Activated B cell treated with CpG ODN at 0.5 μM for 24 hours (primary cell): ENCODE measurements at regions of chr16 and their contacts with region 1.

Region 1: GRCh38 chr16:31458844-31459721 is at the start of gene ARMC5:
- DNase-seq: peak; percentile 93
- ATAC-seq: peak; percentile 75
- H3K4me3 Mint-ChIP-seq: peak within 1 kb of the TSS; percentile 91
- H3K27ac Mint-ChIP-seq: peak within 1 kb of the TSS; percentile 98
- H3K4me1 Mint-ChIP-seq: peaks cover 50% of the 10 kb centered on the region
- H3K27me3 Mint-ChIP-seq: no peaks in the 10 kb centered on the region
- CTCF ChIP-seq: no peak
- total RNA-seq, gene ARMC5: 10.9 TPM in 2 replicates

Region 2: DNA sequence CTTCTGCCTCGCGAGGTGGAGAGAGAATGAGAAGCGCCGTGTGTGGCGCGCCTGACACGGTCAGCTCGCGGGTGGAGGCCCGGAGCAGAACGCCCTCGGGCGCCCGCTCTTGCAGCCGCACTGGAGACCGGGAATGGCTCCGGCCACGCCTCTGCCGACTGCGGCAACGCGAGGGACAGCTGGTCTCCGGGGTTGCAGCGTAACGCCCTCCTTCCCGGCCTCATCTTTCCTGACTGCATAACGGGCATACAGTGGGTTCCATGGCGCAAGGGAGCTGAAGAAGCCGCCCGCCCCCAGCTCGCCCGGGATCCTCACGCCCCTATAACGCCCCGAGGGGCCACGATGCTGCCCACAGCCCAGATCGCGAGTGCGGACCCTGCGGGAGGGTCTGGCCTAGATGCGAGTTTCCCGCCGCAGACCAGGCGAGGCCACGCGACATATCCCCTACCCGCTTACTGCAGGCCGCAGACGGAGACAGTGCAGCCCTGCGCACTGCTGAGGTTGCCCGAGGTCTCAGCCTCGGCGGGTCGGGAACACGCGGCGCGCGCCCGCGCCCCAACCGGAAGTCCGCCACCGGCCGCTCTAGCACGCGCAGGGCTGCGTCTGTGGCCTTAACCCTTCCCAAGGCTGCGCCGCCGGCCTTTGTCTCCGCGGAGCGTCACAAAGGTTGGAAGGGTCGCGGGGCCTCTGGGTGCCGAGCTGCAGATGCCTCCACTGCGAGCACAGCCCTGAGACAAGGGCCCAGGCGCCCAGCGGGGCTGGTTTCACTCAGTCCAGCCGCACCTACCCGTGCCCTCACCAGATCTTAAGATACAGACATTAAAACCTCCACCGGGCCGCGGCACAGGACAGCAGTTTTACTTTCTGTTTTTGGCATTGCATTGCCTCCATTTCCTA is 584.0 kb before region 1 on chr16:
- CTCF ChIA-PET with region 1: no interaction called
- POLR2A ChIA-PET with region 1: interaction called, 5 read pairs
- intact Hi-C with region 1: loop called (anchors 1 kb)
- DNase-seq: peak; percentile 90
- ATAC-seq: peak; percentile 83
- H3K4me3 Mint-ChIP-seq: peak overlapping the region; percentile 94
- H3K27ac Mint-ChIP-seq: peak overlapping the region; percentile 95
- H3K4me1 Mint-ChIP-seq: peaks cover 37% of the 10 kb centered on the region
- H3K27me3 Mint-ChIP-seq: no peaks in the 10 kb centered on the region
- CTCF ChIP-seq: no peak

Region 3: GRCh38 chr16:31073968-31074813 is 384.9 kb before region 1 on chr16 and contains the starts of genes ZNF646 and ZNF668:
- CTCF ChIA-PET with region 1: interaction called, 3 read pairs
- POLR2A ChIA-PET with region 1: interaction called, 20 read pairs
- intact Hi-C with region 1: loop called (anchors 1 kb)
- DNase-seq: peak; percentile 86
- ATAC-seq: peak; percentile 83
- H3K4me3 Mint-ChIP-seq: peak within 1 kb of the TSS; percentile 96
- H3K27ac Mint-ChIP-seq: peak within 1 kb of the TSS; percentile 91
- H3K4me1 Mint-ChIP-seq: peaks cover 34% of the 10 kb centered on the region
- H3K27me3 Mint-ChIP-seq: no peaks in the 10 kb centered on the region
- CTCF ChIP-seq: no peak
- total RNA-seq, gene ZNF646: 32.4 and 32.5 TPM in 2 replicates
- total RNA-seq, gene ZNF668: 8.3 and 10.1 TPM in 2 replicates

Region 4: GRCh38 chr16:31221357-31222160 is 237.5 kb before region 1 on chr16:
- CTCF ChIA-PET with region 1: no interaction called
- POLR2A ChIA-PET with region 1: no interaction called
- intact Hi-C with region 1: no loop called
- DNase-seq: no peak
- ATAC-seq: no peak
- H3K4me3 Mint-ChIP-seq: no peak overlapping the region
- H3K27ac Mint-ChIP-seq: no peak overlapping the region
- H3K4me1 Mint-ChIP-seq: peaks cover 16% of the 10 kb centered on the region
- H3K27me3 Mint-ChIP-seq: peaks cover 25% of the 10 kb centered on the region
- CTCF ChIP-seq: no peak

Region 5: GRCh38 chr16:31440516-31441184 is 18.4 kb before region 1 on chr16:
- CTCF ChIA-PET with region 1: interaction called, 3 read pairs
- POLR2A ChIA-PET with region 1: interaction called, 6 read pairs
- intact Hi-C with region 1: loop called (anchors 2 kb)
- DNase-seq: no peak
- ATAC-seq: no peak
- H3K4me3 Mint-ChIP-seq: peak overlapping the region; percentile 24
- H3K27ac Mint-ChIP-seq: no peak overlapping the region
- H3K4me1 Mint-ChIP-seq: peaks cover 19% of the 10 kb centered on the region
- H3K27me3 Mint-ChIP-seq: peaks cover 2% of the 10 kb centered on the region
- CTCF ChIP-seq: no peak

Region 6: GRCh38 chr16:31501226-31501965 is 42.3 kb after region 1 on chr16:
- CTCF ChIA-PET with region 1: no interaction called
- POLR2A ChIA-PET with region 1: interaction called, 10 read pairs
- intact Hi-C with region 1: no loop called
- DNase-seq: no peak
- ATAC-seq: no peak
- H3K4me3 Mint-ChIP-seq: no peak overlapping the region
- H3K27ac Mint-ChIP-seq: no peak overlapping the region
- H3K4me1 Mint-ChIP-seq: peaks cover 21% of the 10 kb centered on the region
- H3K27me3 Mint-ChIP-seq: no peaks in the 10 kb centered on the region
- CTCF ChIP-seq: no peak

Region 7: DNA sequence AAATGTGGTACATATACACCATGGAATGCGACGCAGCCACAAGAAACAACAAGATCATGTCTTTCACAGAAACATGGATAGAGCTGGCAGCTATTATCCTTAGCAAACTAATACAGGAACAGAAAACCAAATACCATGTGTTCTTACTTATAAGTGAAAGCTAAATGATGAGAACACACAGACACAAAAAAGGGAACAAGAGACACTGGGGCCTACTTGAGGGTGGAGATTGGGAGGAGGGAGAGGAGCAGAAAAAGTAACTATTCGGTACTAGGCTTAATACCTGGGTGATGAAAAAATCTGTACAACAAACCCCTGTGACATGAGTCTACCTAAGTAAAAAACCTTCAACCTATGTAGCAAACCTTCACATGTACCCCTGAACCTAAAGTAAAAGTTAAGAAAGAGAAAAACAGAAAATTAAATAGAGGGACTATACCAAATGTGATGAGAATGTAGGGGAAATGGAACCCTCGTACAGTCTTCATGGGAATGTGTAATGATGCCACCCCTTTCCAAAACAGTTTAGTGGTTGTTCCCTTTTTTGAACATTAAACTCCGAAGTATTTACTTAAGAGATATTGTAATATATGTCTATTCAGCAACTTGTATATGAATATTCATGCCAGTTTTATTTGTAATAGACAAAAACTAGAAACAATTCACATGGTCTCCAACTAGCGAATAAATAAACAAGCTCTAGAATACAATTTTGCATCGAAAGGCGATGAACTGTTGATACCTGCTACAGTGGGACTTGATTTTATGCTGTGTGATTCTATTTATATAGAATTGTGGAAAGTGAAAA is 102.5 kb after region 1 on chr16:
- CTCF ChIA-PET with region 1: no interaction called
- POLR2A ChIA-PET with region 1: no interaction called
- intact Hi-C with region 1: no loop called
- DNase-seq: no peak
- ATAC-seq: no peak
- H3K4me3 Mint-ChIP-seq: no peak overlapping the region
- H3K27ac Mint-ChIP-seq: no peak overlapping the region
- H3K4me1 Mint-ChIP-seq: no peaks in the 10 kb centered on the region
- H3K27me3 Mint-ChIP-seq: peaks cover 13% of the 10 kb centered on the region
- CTCF ChIP-seq: no peak

Region 8: GRCh38 chr16:31713071-31713944 is 254.2 kb after region 1 on chr16:
- CTCF ChIA-PET with region 1: no interaction called
- POLR2A ChIA-PET with region 1: interaction called, 9 read pairs
- intact Hi-C with region 1: loop called (anchors 5 kb)
- DNase-seq: peak; percentile 80
- ATAC-seq: peak; percentile 98
- H3K4me3 Mint-ChIP-seq: peak overlapping the region; percentile 99
- H3K27ac Mint-ChIP-seq: peak overlapping the region; percentile 97
- H3K4me1 Mint-ChIP-seq: peaks cover 49% of the 10 kb centered on the region
- H3K27me3 Mint-ChIP-seq: no peaks in the 10 kb centered on the region
- CTCF ChIP-seq: no peak